A549 (cell line): ENCODE measurements at regions of chr2 and their contacts with region 1.

Region 1: GRCh38 chr2:65432227-65433190 is at the start of gene SPRED2:
- DNase-seq: peak; percentile 81 to 96
- ATAC-seq: peak; percentile 57 to 78
- H3K4me3 ChIP-seq: peak within 1 kb of the TSS; percentile 96
- H3K27ac ChIP-seq: peak within 1 kb of the TSS; percentile 83 to 94
- H3K4me1 ChIP-seq: peaks cover 25% of the 10 kb centered on the region
- CTCF ChIP-seq: 0 out of 3 replicates have a peak, but pooled peaks have one; percentile 9
- EP300 ChIP-seq: 0 out of 5 replicates have a peak, but pooled peaks of 1 of the 2 experiments have one; percentile 14
- POLR2A ChIP-seq: peak; percentile 41
- RAD21 ChIP-seq: peak in 1 of 2 experiments; percentile 33; a peak in 3 of 5 replicates
- polyA plus RNA-seq, gene SPRED2: 28.1 and 29.3 TPM in 2 replicates

Region 2: GRCh38 chr2:65366595-65367125 is 65.8 kb before region 1 on chr2:
- CTCF ChIA-PET with region 1: interaction called, 3 read pairs
- POLR2A ChIA-PET with region 1: interaction called, 18 read pairs
- DNase-seq: peak; percentile 93 to 96
- ATAC-seq: peak; percentile 93 to 94
- H3K4me3 ChIP-seq: peak overlapping the region; percentile 25
- H3K27ac ChIP-seq: peak overlapping the region; percentile 39 to 73; a peak in 5 of 6 replicates
- H3K4me1 ChIP-seq: peaks cover 62% of the 10 kb centered on the region
- CTCF ChIP-seq: no peak
- EP300 ChIP-seq: peak; percentile 23 to 26; a peak in 1 of 5 replicates
- POLR2A ChIP-seq: no peak
- RAD21 ChIP-seq: peak; percentile 14 to 20; a peak in 1 of 5 replicates

Region 3: DNA sequence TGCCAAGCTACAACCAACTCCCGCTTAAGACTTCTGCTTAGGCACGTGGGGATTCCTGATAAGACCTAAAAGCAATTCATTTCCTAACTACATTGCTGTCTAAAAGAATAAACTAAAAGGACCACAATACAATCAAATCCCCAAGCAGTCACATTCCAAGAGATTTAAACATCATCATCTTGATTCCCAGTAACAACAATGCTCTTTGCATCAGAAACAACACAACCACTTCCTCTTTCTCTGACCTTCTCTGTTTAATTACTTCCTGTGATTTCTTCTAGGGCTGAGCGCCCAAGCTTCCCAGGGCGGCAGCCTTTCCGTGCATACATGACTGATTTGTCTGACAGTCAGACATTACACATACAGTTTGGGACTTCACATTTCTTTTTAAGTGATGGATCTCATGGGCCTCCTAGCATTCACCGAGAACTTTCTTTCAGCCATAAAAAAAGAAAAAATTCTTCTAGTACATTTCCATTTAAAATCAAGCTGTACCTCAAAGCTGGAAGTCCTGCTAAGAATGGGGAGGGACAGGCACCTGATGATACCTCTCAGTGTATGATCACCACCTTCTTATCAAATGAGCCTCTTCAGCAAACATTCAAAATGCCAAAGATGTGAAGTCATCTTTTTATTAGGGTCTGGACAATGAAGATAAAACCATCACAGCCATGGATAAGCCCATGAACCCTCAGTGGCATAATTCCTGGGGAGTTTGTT is 11.6 kb before region 1 on chr2:
- CTCF ChIA-PET with region 1: interaction called, 10 read pairs
- POLR2A ChIA-PET with region 1: interaction called, 4 read pairs
- DNase-seq: peak; percentile 36 to 50
- ATAC-seq: peak in 1 of 2 experiments; percentile 65; a peak in 4 of 6 replicates
- H3K4me3 ChIP-seq: no peak overlapping the region
- H3K27ac ChIP-seq: peak overlapping the region; percentile 34 to 41; a peak in 4 of 6 replicates
- H3K4me1 ChIP-seq: peaks cover 45% of the 10 kb centered on the region
- CTCF ChIP-seq: no peak
- EP300 ChIP-seq: no peak
- POLR2A ChIP-seq: no peak
- RAD21 ChIP-seq: no peak

Region 4: GRCh38 chr2:65443509-65444201 is 11.1 kb after region 1 on chr2:
- CTCF ChIA-PET with region 1: no interaction called
- POLR2A ChIA-PET with region 1: no interaction called
- DNase-seq: no peak
- ATAC-seq: peak; percentile 52 to 58; a peak in 4 of 6 replicates
- H3K4me3 ChIP-seq: no peak overlapping the region
- H3K27ac ChIP-seq: no peak overlapping the region
- H3K4me1 ChIP-seq: no peaks in the 10 kb centered on the region
- CTCF ChIP-seq: no peak
- EP300 ChIP-seq: no peak
- POLR2A ChIP-seq: no peak
- RAD21 ChIP-seq: no peak

Region 5: DNA sequence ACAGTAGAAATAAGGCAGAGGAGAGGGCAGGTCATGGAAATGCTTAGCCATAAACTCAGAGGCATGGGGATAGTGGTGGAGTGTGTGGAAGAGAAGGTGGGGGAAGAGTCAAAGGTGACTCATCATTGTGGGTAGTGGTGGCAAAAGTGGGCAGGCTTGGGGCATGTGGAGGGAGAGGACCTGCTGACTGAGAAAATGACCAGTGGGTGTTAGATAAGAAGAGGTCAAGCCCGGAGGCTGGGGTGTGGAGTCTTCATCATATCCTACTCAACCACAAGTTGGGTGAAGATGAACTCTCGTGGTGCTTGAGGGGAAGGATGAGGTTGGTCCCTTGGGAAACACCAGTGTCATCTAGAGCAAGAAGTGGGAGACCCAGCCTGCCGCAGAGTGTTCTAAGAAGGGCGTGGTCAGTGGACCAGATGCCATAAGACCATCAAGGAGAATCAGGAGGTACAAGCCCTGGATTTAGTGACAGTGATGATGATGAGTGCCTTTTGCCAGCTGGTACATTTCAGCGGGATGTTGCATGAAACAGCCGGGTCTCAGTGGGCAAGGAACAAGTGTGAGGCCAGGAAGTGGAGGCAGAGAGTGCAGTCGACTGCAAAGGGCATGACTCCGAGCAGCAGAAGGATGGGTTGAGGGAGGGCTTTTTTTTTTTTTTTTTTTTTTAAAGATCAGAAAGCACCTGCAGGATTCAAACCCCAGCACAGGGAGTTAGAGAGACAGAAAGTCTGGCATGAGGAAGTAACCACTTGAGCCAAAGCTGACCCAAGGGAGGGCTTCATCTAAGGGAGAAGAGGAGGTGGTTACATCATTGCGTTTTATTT is 122.5 kb after region 1 on chr2:
- CTCF ChIA-PET with region 1: interaction called, 27 read pairs
- POLR2A ChIA-PET with region 1: no interaction called
- DNase-seq: no peak
- ATAC-seq: no peak
- H3K4me3 ChIP-seq: no peak overlapping the region
- H3K27ac ChIP-seq: no peak overlapping the region
- H3K4me1 ChIP-seq: no peaks in the 10 kb centered on the region
- CTCF ChIP-seq: no peak
- EP300 ChIP-seq: no peak
- POLR2A ChIP-seq: no peak
- RAD21 ChIP-seq: no peak